Naive thymus-derived CD4-positive, alpha-beta T cell (primary cell): ENCODE measurements at regions of chr13 and their contacts with region 1.

Region 1: DNA sequence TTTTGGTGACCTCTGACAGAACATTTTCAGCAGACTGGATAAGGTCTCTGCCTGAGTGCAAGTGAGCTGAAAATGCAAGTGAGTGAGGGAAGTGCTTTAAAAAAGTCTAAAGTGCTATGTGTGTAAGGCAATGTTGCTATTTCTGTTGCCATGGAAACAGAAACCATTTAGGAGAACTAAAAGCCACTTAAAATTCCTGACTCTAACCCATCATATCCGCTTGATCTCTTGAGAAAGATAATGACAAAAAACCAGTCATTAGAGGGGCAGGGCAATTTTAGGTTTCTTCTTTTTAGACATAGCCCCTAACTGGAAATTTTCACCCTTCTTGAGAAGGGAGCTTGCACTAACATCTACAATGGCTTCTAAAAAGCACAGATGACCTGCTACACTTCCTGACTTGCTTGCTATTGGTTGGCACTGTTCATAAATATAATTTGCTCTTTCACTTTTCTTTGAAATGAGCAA is at the start of gene CYSLTR2:
- DNase-seq: peak in 7 of 9 donors; percentile 63 to 89 (median 81)
- ATAC-seq: peak; percentile 89
- H3K4me3 ChIP-seq: peak within 1 kb of the TSS; percentile 49
- H3K4me3 Mint-ChIP-seq: peak within 1 kb of the TSS; percentile 77 to 98 (median 86)
- H3K27ac ChIP-seq: peak within 1 kb of the TSS; percentile 82
- H3K27ac Mint-ChIP-seq: peak within 1 kb of the TSS; percentile 86 to 99 (median 94)
- H3K4me1 ChIP-seq: peaks cover 11 to 26% of the 10 kb centered on the region in 2 donors
- H3K4me1 Mint-ChIP-seq: peaks cover 22 to 65% (median 56%) of the 10 kb centered on the region in 7 donors
- H3K27me3 ChIP-seq: no peaks in the 10 kb centered on the region
- H3K27me3 Mint-ChIP-seq: peaks cover 0 to 2% (median 0%) of the 10 kb centered on the region in 5 donors
- total RNA-seq, gene CYSLTR2: 2.1 to 6.5 (median 3.5) TPM

Region 2: DNA sequence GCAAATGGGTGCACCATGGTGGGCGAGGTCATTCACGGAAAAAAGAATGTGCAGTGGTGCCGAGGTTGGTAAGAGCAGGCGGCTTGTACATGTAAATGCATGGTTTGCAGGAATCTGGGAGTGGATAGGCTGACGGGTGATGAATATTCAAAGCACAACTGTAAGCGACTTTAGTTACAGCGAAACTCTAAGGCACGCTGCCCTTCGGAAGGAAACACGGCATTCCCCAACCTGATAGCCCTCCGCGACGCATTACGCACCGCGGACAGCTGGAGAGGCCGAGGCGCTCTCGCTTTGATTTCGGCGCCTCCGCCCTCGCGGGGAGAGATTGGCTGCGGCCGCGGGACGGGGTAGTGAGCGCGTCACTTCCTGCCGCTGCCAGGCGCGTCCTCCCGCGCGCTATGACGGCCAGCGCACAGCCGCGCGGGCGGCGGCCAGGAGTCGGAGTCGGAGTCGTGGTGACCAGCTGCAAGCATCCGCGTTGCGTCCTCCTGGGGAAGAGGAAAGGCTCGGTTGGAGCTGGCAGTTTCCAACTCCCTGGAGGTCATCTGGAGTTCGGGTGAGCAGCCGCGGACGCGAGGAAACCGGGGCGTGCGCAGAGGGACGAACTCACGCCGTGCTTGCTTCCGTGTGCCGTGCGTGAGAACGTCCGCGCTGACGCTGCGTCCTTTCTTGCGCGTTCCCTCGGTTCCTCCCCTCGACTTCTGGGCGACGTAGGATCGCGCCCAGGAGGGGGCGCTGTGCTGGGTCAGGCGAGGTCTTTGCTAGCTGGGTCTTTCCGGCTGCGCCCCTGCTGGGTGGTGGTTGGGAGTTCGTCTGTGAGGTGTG is 615.9 kb before region 1 on chr13 and contains the start of gene NUDT15:
- CTCF ChIA-PET with region 1: no interaction called
- POLR2A ChIA-PET with region 1: no interaction called
- intact Hi-C with region 1: loop called (anchors 1 to 5 kb)
- DNase-seq: peak; percentile 93 to 98 (median 97)
- ATAC-seq: peak; percentile 96
- H3K4me3 ChIP-seq: peak within 1 kb of the TSS; percentile 90
- H3K4me3 Mint-ChIP-seq: peak within 1 kb of the TSS; percentile 82 to 98 (median 95)
- H3K27ac ChIP-seq: peak within 1 kb of the TSS; percentile 91
- H3K27ac Mint-ChIP-seq: peak within 1 kb of the TSS; percentile 96 to 100 (median 97)
- H3K4me1 ChIP-seq: peaks cover 14 to 15% of the 10 kb centered on the region in 2 donors
- H3K4me1 Mint-ChIP-seq: peaks cover 15 to 52% (median 40%) of the 10 kb centered on the region in 7 donors
- H3K27me3 ChIP-seq: no peaks in the 10 kb centered on the region
- H3K27me3 Mint-ChIP-seq: no peaks in the 10 kb centered on the region
- total RNA-seq, gene NUDT15: 4.3 to 13.6 (median 8.7) TPM

Region 3: GRCh38 chr13:48334534-48335127 is 318.9 kb before region 1 on chr13:
- CTCF ChIA-PET with region 1: no interaction called
- POLR2A ChIA-PET with region 1: no interaction called
- intact Hi-C with region 1: loop called in 1 of 2 experiments (anchors 5 kb)
- DNase-seq: peak in 6 of 9 donors; percentile 27 to 64 (median 48)
- ATAC-seq: peak; percentile 79
- H3K4me3 ChIP-seq: no peak overlapping the region
- H3K4me3 Mint-ChIP-seq: no peak overlapping the region
- H3K27ac ChIP-seq: no peak overlapping the region
- H3K27ac Mint-ChIP-seq: no peak overlapping the region
- H3K4me1 ChIP-seq: no peaks in the 10 kb centered on the region
- H3K4me1 Mint-ChIP-seq: peaks cover 0 to 23% (median 5%) of the 10 kb centered on the region in 7 donors
- H3K27me3 ChIP-seq: no peaks in the 10 kb centered on the region
- H3K27me3 Mint-ChIP-seq: no peaks in the 10 kb centered on the region

Region 4: GRCh38 chr13:48505597-48506091 is 147.9 kb before region 1 on chr13:
- CTCF ChIA-PET with region 1: no interaction called
- POLR2A ChIA-PET with region 1: interaction called, 3 read pairs
- intact Hi-C with region 1: loop called (anchors 5 to 10 kb)
- DNase-seq: peak in 7 of 9 donors; percentile 73 to 88 (median 84)
- ATAC-seq: peak; percentile 85
- H3K4me3 ChIP-seq: peak overlapping the region; percentile 37
- H3K4me3 Mint-ChIP-seq: peak overlapping the region; percentile 51 to 86 (median 76)
- H3K27ac ChIP-seq: peak overlapping the region; percentile 59
- H3K27ac Mint-ChIP-seq: peak overlapping the region; percentile 83 to 98 (median 91)
- H3K4me1 ChIP-seq: peaks cover 34 to 47% of the 10 kb centered on the region in 2 donors
- H3K4me1 Mint-ChIP-seq: peaks cover 47 to 78% (median 61%) of the 10 kb centered on the region in 7 donors
- H3K27me3 ChIP-seq: no peaks in the 10 kb centered on the region
- H3K27me3 Mint-ChIP-seq: peaks cover 0 to 11% (median 0%) of the 10 kb centered on the region in 5 donors

Region 5: DNA sequence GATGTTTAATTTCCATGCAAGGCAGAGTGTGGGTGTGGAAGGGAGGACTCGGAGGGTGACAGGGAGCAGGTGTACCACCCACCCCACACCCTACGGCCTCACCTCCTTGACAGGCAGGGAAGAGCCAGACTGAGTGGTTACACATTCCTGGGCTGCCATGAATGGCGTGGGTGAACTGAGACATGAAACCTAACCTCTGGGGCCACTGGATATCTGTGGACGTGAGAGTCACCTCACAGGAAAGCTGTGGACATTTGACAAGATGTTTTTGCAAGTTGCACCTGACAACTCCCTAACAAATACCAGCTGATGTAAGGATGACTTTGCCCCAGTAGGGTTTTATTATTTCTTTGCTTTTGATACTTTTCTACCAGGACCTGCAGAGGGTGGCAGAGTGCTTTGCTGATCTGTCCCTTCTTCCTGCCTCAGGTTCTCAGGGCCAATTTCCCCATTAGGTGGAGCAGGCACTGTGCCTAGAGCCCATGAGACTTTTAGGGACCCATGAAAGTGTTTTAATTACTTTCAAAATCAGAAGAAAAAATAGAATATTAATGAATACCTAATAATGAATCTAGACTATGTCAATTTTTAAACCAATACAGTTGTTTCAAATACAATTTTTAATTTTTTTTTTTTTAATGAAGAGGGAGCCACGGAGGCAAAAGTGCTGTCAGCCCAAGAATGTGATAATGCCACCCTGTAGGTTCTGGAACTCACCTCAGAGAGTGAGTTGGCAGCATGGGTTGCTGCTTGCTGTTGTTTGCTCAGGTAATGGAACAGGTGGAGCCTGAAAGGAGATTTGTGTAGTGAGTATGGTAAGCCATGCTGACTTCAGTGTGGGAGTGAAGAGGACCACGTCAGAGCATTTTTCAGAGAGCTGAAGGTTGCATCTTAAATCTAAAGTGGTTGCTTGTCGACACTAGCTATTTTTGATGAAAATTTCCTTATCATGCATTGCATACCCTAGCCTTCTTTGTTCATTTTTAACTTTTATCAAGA is 57.8 kb before region 1 on chr13:
- CTCF ChIA-PET with region 1: interaction called, 7 read pairs
- POLR2A ChIA-PET with region 1: no interaction called
- intact Hi-C with region 1: loop called (anchors 1 to 5 kb)
- DNase-seq: peak in 8 of 9 donors; percentile 24 to 79 (median 60)
- ATAC-seq: peak; percentile 96
- H3K4me3 ChIP-seq: no peak overlapping the region
- H3K4me3 Mint-ChIP-seq: no peak overlapping the region
- H3K27ac ChIP-seq: no peak overlapping the region
- H3K27ac Mint-ChIP-seq: peak overlapping the region in 1 of 9 donors; percentile 10
- H3K4me1 ChIP-seq: no peaks in the 10 kb centered on the region
- H3K4me1 Mint-ChIP-seq: peaks cover 0 to 3% (median 0%) of the 10 kb centered on the region in 7 donors
- H3K27me3 ChIP-seq: no peaks in the 10 kb centered on the region
- H3K27me3 Mint-ChIP-seq: peaks cover 0 to 19% (median 0%) of the 10 kb centered on the region in 5 donors

Region 6: DNA sequence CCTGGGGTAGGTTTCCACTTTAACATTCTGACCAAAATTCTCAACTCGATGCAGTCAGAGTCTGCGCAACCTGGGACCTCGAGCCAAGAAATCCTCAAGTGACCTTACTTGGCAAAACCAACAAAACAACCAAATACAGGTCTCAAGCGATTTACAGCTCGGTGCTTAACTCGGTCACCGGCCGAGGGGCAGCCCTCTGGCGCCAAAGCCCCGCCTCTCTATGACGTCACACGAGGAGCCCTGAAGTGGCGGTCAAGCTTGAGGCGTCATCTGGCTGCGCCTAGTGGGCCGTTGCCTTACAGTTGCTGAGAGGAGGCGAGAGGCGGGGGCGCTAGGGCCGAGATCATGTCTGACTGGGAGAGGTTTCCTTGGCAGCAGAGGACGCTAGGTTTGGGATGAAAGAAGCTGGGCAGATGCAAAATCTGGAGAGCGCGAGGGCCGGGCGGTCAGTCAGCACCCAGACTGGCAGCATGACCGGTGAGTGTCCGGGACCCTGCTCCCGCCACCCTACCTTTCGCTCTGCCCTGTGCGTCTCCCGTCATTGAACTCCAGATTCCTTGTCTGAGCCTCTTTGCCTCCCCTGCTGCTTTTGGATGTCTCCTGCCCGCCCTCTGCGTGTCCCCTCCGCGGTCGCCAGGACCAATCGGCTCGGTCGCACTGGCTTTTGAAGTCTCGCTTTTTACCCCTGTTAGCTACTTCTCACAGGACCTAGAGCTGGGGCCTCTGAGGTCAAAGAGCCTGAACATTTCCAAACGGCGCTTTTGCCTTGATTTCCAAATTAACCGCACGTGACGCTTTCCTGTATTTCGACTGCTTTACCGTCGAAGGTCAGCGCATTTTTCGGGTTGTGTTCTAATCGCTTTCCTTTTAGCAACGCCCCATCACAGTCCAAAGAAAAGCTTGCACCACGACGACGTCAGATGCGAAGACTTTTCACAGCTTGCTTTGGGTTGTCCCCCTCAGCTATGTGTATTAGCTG is 594.4 kb after region 1 on chr13 and contains the start of gene CDADC1:
- CTCF ChIA-PET with region 1: no interaction called
- POLR2A ChIA-PET with region 1: no interaction called
- intact Hi-C with region 1: loop called in 1 of 2 experiments (anchors 10 kb)
- DNase-seq: peak; percentile 44 to 93 (median 54)
- ATAC-seq: peak; percentile 90
- H3K4me3 ChIP-seq: peak within 1 kb of the TSS; percentile 93
- H3K4me3 Mint-ChIP-seq: peak within 1 kb of the TSS; percentile 94 to 99 (median 98)
- H3K27ac ChIP-seq: peak within 1 kb of the TSS; percentile 75
- H3K27ac Mint-ChIP-seq: peak within 1 kb of the TSS; percentile 92 to 97 (median 95)
- H3K4me1 ChIP-seq: peaks cover 1 to 3% of the 10 kb centered on the region in 2 donors
- H3K4me1 Mint-ChIP-seq: peaks cover 16 to 59% (median 53%) of the 10 kb centered on the region in 7 donors
- H3K27me3 ChIP-seq: no peaks in the 10 kb centered on the region
- H3K27me3 Mint-ChIP-seq: peaks cover 0 to 25% (median 0%) of the 10 kb centered on the region in 5 donors
- total RNA-seq, gene CDADC1: 10.7 to 21.3 (median 14.5) TPM